T-cell (primary cell): ENCODE measurements at regions of chr16 and their contacts with region 1.

Region 1: GRCh38 chr16:89922884-89923690 is at the start of gene TUBB3:
- DNase-seq: peak in 1 of 35 experiments; percentile 50
- ATAC-seq: peak in 1 of 4 experiments; percentile 11
- H3K4me3 ChIP-seq: peak within 1 kb of the TSS; percentile 23 to 39
- H3K4me3 Mint-ChIP-seq: peak within 1 kb of the TSS; percentile 13 to 56 (median 55)
- H3K27ac ChIP-seq: no peak within 1 kb of the TSS
- H3K27ac Mint-ChIP-seq: peak within 1 kb of the TSS in 1 of 2 donors; percentile 15
- H3K4me1 ChIP-seq: peaks cover 5 to 83% of the 10 kb centered on the region in 2 experiments
- H3K4me1 Mint-ChIP-seq: peaks cover 26 to 58% (median 44%) of the 10 kb centered on the region in 3 donors
- H3K27me3 ChIP-seq: peaks cover 0 to 95% of the 10 kb centered on the region in 2 experiments
- H3K27me3 Mint-ChIP-seq: peaks cover 0 to 42% of the 10 kb centered on the region in 2 donors
- total RNA-seq, gene TUBB3: 0.58 to 1.8 (median 0.93) TPM

Region 2: DNA sequence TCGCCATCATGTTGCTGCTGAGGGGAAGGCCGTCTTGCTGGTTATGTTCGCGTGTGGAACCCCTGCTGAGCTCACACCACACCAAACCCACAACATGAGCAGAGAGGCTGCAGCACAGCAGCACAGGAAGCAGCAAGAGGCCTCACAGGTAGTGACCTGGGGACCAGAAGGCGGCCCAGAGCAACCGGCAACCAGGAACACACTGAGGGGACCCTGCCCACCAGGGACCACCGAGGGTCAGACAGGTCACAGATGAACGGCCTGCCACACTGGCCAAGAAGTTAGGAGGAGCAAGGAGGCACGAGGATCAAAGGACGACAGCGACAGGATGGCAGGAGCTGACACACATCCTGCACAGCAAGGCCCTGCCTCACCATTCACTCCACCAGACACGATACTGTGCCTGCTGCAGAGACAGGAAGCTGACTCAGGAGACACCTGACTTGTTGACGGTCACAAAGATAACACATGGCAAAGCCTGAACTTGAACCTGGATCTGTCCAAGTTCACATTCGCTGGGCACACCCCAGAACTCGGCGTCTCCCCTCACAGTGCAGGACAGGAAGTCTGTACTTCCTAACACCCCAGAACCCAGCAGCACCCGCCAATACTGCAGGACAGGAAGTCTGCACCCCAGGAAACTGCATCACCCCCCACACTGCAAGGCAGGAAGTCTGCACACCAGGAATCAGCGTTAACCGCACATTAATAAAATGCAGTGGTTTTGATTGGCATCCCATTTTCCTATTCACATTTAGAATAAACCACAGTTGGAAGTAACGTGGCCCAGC is 607.1 kb before region 1 on chr16:
- CTCF ChIA-PET with region 1: interaction called in 1 of 2 experiments, 10 read pairs
- POLR2A ChIA-PET with region 1: no interaction called
- DNase-seq: peak; percentile 58 to 89 (median 71)
- ATAC-seq: peak; percentile 84 to 91 (median 85)
- H3K4me3 ChIP-seq: peak overlapping the region; percentile 20 to 53
- H3K4me3 Mint-ChIP-seq: peak overlapping the region; percentile 74 to 82 (median 76)
- H3K27ac ChIP-seq: peak overlapping the region; percentile 85
- H3K27ac Mint-ChIP-seq: peak overlapping the region; percentile 92 to 96
- H3K4me1 ChIP-seq: peaks cover 56 to 91% of the 10 kb centered on the region in 2 experiments
- H3K4me1 Mint-ChIP-seq: peaks cover 93 to 96% (median 96%) of the 10 kb centered on the region in 3 donors
- H3K27me3 ChIP-seq: no peaks in the 10 kb centered on the region
- H3K27me3 Mint-ChIP-seq: no peaks in the 10 kb centered on the region

Region 3: GRCh38 chr16:89880477-89881367 is 42.4 kb before region 1 on chr16:
- CTCF ChIA-PET with region 1: no interaction called
- POLR2A ChIA-PET with region 1: no interaction called
- DNase-seq: no peak
- ATAC-seq: no peak
- H3K4me3 ChIP-seq: no peak overlapping the region
- H3K4me3 Mint-ChIP-seq: no peak overlapping the region
- H3K27ac ChIP-seq: no peak overlapping the region
- H3K27ac Mint-ChIP-seq: no peak overlapping the region
- H3K4me1 ChIP-seq: peaks cover 0 to 2% of the 10 kb centered on the region in 2 experiments
- H3K4me1 Mint-ChIP-seq: peaks cover 17 to 19% (median 19%) of the 10 kb centered on the region in 3 donors
- H3K27me3 ChIP-seq: no peaks in the 10 kb centered on the region
- H3K27me3 Mint-ChIP-seq: no peaks in the 10 kb centered on the region